Mammary epithelial cell (primary cell): ENCODE measurements at regions of chr3 and their contacts with region 1.

Region 1: DNA sequence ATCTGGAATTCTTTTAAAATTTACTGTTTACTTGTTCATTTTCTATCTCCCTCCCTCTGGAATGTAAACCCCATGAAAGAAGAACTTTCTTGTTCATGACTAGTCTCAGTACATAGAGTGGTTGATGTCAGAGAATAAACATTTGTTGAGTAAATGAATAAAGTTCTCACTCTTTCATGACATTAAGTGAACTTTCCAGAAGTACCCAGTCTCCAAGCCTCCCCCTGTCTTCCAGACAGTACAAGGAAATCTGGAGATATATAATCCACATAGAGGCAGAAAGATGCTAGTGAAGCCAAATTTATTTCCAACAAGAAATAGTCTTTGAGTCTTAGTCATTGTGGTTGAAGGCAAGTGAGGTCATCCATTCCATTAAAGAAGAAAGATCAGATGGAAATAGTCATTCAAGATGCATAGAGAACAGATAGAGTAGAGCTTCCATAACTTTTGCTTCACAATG is 71.5 kb upstream of the GALNT15 start:
- DNase-seq: peak; percentile 63
- H3K4me3 ChIP-seq: no peak overlapping the region
- H3K27ac ChIP-seq: no peak overlapping the region
- H3K4me1 ChIP-seq: peaks cover 22% of the 10 kb centered on the region
- H3K27me3 ChIP-seq: no peaks in the 10 kb centered on the region
- CTCF ChIP-seq: no peak

Region 2: DNA sequence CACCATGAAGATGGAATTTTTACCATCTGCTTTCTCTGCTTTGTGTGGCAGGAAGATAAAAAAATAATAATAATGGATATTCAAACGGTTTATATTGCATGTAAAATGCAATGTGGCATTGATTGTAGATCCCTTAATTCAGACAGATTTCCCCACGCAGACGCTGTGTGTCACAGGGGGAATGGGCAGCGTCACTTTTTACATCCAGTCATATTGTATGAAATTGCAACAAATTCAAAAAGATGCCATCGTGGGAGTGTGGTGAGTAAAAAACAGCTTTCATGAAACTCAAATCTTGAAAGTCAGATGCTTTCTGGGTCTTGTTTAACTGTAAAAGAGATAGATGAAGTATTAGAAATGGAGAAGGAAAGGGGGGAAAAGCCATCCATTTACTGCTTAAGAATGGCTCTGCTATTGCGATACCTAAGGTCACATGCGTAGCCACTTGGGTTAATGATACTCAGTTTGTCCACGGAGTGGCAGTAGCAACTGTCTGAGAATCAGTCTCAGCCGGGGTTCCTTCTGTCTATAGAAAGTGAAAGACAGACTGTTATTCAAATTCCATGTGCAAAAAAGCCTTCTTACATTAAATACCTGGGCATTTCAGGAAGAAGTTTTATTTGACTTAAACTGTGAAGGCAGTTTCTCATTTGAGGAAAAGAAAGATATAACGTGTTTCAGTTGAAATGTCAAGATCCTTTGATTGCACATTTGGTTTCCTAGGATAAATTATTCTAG is 472.9 kb before region 1 on chr3:
- CTCF ChIA-PET with region 1: no interaction called
- dilution Hi-C with region 1: no loop called
- in situ Hi-C with region 1: no loop called
- intact Hi-C with region 1: no loop called
- DNase-seq: peak; percentile 72
- H3K4me3 ChIP-seq: peak overlapping the region in 2 of 3 experiments; percentile 44 to 52
- H3K27ac ChIP-seq: peak overlapping the region; percentile 76
- H3K4me1 ChIP-seq: peaks cover 46% of the 10 kb centered on the region
- H3K27me3 ChIP-seq: no peaks in the 10 kb centered on the region
- CTCF ChIP-seq: peak; percentile 71 to 78

Region 3: DNA sequence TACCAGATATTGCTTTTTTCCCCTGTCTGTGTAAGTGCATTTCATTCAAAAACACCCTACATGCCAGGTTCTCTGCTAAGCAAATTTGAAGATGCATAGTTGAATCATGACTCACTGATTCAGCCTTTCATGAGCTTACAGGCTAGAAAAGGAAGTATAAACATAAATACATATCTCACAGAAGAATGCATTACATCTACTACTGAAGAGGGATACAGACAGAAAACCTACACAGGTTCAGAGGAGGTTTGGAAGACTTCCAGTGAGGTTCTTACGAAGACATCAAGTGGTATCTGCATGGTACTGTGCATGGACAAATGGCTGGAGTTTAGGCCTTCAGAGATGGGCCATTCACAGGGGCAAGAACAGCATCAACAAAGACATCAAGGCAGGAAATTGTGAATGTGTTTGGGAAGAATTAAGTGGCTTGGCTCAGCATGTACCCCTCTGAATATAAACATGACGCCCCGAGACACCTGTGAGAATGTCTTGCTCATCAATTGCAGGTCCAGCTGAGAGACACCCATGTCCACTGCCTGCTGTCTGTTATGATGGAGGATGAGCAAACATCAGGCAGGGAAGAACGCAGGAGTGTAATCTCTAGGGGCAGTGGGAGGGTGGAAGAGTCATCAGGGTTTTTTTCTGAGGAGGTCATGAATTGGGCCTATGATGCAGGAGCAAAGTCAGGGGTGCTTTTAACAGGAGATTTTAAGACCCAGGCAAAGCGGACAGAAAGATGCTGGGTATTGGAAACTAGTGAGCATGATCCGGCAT is 33.6 kb before region 1 on chr3:
- CTCF ChIA-PET with region 1: no interaction called
- dilution Hi-C with region 1: no loop called
- in situ Hi-C with region 1: loop called in 1 of 2 experiments (anchors 5 kb)
- intact Hi-C with region 1: loop called (anchors 1 kb)
- DNase-seq: peak; percentile 68
- H3K4me3 ChIP-seq: no peak overlapping the region
- H3K27ac ChIP-seq: no peak overlapping the region
- H3K4me1 ChIP-seq: peaks cover 58% of the 10 kb centered on the region
- H3K27me3 ChIP-seq: no peaks in the 10 kb centered on the region
- CTCF ChIP-seq: no peak

Region 4: DNA sequence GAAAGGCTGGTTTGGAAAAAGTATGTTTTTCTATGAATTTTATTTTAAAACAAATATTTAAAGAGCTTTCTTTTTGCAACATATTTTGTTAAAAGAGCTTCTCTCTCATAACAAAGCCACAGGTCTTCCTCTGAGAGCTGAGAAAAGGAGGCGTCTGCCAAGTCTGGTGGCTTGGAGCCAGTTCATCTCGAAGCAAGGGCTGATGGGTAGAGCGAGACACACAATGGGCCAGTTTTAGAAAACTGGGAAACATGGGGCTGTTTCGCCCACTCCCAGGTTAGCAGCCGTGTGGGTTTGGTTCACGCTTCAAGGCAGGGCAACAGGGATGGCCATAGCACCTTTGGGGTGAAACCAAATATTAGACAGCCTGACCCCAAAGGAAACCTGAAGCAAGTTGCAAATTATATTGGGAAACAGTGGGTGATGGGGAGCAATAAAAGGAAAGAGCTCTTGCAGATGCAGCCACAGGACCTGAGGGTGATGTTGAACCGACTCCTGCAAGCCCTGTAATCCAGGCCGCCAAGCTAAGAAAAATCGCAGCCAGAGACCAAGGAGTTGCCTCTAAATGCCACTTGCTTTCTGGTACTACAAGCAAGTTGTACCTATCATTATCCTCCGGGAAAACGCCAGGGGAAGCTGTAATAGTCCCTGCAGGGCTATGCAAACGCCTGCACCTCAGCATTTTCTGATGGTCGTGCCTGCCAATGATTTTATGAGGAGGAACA is 16.9 kb before region 1 on chr3:
- CTCF ChIA-PET with region 1: no interaction called
- dilution Hi-C with region 1: no loop called
- in situ Hi-C with region 1: no loop called
- intact Hi-C with region 1: no loop called
- DNase-seq: no peak
- H3K4me3 ChIP-seq: no peak overlapping the region
- H3K27ac ChIP-seq: no peak overlapping the region
- H3K4me1 ChIP-seq: peaks cover 19% of the 10 kb centered on the region
- H3K27me3 ChIP-seq: no peaks in the 10 kb centered on the region
- CTCF ChIP-seq: no peak

Region 5: DNA sequence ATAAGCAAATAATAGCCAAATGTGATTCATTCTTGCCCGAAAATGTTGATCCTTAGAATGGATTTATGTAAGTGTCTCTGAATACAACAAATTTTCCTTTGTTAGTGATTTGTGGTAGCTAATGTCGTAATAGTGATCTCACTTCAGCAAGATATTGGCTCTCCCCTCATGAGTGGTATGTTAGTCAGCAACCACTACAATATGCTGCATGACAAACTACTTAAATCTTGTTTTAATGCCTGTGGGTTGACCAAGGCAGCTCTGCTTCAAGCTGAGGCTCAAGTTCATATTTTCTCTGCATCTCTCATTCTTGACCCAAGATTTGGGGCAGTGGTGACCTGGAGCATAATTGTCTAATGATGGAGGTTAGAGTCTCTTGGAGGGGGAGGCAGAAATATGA is 21.7 kb after region 1 on chr3:
- CTCF ChIA-PET with region 1: no interaction called
- dilution Hi-C with region 1: no loop called
- in situ Hi-C with region 1: no loop called
- intact Hi-C with region 1: loop called (anchors 1 kb)
- DNase-seq: peak; percentile 94
- H3K4me3 ChIP-seq: no peak overlapping the region
- H3K27ac ChIP-seq: peak overlapping the region; percentile 18
- H3K4me1 ChIP-seq: peaks cover 26% of the 10 kb centered on the region
- H3K27me3 ChIP-seq: no peaks in the 10 kb centered on the region
- CTCF ChIP-seq: no peak

Region 6: DNA sequence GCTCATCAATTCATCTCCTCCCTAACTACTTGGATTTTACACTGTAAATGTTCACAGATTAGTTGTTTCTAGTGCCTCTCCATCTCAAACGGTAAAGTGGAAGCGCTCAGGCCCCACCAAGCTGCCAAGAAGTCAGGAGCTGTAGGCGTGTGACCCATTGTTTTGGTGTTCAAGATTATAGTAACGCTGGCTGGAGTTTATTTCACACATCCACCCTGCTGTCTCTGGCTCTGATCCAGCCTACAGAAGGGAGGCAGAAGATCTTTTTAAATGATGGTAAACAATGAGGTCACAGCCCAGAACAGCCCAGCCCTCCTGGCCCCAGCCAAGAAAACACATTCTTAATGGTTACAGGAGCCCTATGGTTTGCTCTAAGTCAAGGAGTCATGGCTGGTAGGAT is 45.8 kb after region 1 on chr3:
- CTCF ChIA-PET with region 1: no interaction called
- dilution Hi-C with region 1: no loop called
- in situ Hi-C with region 1: no loop called
- intact Hi-C with region 1: no loop called
- DNase-seq: no peak
- H3K4me3 ChIP-seq: no peak overlapping the region
- H3K27ac ChIP-seq: no peak overlapping the region
- H3K4me1 ChIP-seq: peaks cover 8% of the 10 kb centered on the region
- H3K27me3 ChIP-seq: no peaks in the 10 kb centered on the region
- CTCF ChIP-seq: no peak

Region 7: DNA sequence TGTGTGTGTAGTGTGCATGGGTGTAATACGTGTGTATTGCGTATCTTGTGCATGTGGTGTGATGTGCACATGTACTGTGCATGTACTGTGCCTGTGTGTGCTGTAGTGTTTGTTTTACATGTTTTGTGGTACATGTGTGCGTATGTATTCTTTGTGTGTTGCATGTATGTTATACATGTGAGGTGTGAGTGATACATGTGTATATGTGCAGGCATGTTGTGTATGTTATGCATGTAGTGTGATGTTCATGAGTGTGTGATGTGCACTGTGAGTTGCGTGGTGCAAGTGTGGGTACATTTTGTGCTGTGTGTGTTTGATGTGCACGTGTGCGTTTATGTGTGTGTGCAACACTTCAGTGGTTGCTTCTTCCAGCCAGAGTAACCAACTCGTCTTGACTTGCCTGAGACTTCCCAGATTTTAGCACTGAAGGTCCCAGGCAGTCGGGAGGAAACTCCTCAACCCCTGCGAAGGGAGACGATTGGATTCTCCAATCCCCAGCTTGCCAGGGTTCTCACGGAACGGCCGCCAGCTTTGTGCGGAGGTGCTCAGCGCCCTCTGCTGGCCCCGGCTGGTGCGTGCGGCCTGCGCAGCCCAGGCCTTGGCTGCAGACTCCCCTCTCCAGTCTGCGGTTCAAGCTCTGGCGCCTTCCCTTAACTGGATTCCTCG is 75.2 kb after region 1 on chr3:
- CTCF ChIA-PET with region 1: no interaction called
- dilution Hi-C with region 1: no loop called
- in situ Hi-C with region 1: no loop called
- intact Hi-C with region 1: loop called (anchors 5 kb)
- DNase-seq: peak; percentile 62
- H3K4me3 ChIP-seq: no peak overlapping the region
- H3K27ac ChIP-seq: no peak overlapping the region
- H3K4me1 ChIP-seq: peaks cover 5% of the 10 kb centered on the region
- H3K27me3 ChIP-seq: peaks cover 4% of the 10 kb centered on the region
- CTCF ChIP-seq: peak; percentile 93 to 99

Region 8: DNA sequence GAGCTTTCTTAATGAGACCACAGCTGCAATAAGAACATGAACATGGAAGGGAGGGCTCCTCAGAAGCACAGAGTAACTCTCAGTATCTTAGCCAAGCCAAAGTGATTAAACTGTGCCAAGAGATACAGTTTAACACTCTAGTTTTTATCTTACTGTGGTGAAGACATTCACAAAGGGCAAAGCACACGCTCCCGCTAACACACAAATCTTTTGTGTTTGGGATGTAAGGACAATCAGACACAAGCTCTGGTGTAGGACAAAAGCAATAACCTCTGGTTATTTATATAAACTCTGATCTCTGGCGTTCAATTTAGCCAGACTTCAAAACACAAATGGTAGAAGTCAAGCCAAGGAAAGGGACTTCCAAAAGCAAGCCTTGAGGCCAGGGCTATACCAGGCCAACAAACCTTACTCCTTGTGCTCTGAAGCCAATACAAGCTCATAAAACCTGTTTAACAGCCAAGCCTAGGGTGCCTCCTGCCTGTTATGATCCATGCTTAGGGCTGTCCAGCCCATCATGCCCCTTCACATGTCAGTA is 134.0 kb after region 1 on chr3:
- CTCF ChIA-PET with region 1: no interaction called
- dilution Hi-C with region 1: no loop called
- in situ Hi-C with region 1: no loop called
- intact Hi-C with region 1: no loop called
- DNase-seq: no peak
- H3K4me3 ChIP-seq: no peak overlapping the region
- H3K27ac ChIP-seq: no peak overlapping the region
- H3K4me1 ChIP-seq: peaks cover 8% of the 10 kb centered on the region
- H3K27me3 ChIP-seq: no peaks in the 10 kb centered on the region
- CTCF ChIP-seq: no peak